ENCODE measurements at regions of chr9 and their contacts with region 1.

Region 1: GRCh38 chr9:131393622-131394463 is at the start of gene PRRC2B:
- DNase-seq: peak; percentile 71
- H3K4me3 ChIP-seq: peak within 1 kb of the TSS; percentile 57 to 87 (median 60)
- H3K27ac ChIP-seq: peak within 1 kb of the TSS; percentile 79
- H3K4me1 ChIP-seq: peaks cover 39% of the 10 kb centered on the region
- H3K27me3 ChIP-seq: no peaks in the 10 kb centered on the region
- CTCF ChIP-seq: peak; percentile 12 to 47
- total RNA-seq, gene PRRC2B: 84.0 to 170 TPM

Region 2: GRCh38 chr9:131349881-131350563 is 43.8 kb before region 1 on chr9:
- CTCF ChIA-PET with region 1: no interaction called
- dilution Hi-C with region 1: no loop called
- in situ Hi-C with region 1: no loop called
- intact Hi-C with region 1: no loop called
- DNase-seq: peak; percentile 58
- H3K4me3 ChIP-seq: peak overlapping the region in 2 of 3 experiments; percentile 21 to 41
- H3K27ac ChIP-seq: no peak overlapping the region
- H3K4me1 ChIP-seq: peaks cover 8% of the 10 kb centered on the region
- H3K27me3 ChIP-seq: no peaks in the 10 kb centered on the region
- CTCF ChIP-seq: peak; percentile 75 to 88

Region 3: DNA sequence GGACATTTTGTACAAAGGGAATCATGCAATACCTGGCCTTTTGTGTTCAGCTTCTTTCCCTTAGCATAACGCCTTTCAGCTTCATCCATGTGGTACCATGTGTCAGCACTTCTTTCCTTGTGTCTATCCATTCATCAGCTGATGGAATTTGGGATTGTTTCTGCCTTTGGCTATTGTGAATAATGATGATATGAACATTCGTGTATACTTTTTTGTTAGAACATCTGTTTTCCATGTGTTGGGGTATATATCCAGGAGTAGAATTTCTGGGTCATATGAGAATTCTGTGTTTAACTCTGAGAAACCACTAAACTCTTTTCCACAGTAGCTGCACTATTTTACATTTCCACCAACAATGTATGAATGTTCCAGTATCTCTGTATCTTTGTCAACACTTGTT is 14.8 kb before region 1 on chr9:
- CTCF ChIA-PET with region 1: no interaction called
- dilution Hi-C with region 1: no loop called
- in situ Hi-C with region 1: no loop called
- intact Hi-C with region 1: loop called (anchors 2 kb)
- DNase-seq: no peak
- H3K4me3 ChIP-seq: no peak overlapping the region
- H3K27ac ChIP-seq: no peak overlapping the region
- H3K4me1 ChIP-seq: peaks cover 10% of the 10 kb centered on the region
- H3K27me3 ChIP-seq: no peaks in the 10 kb centered on the region
- CTCF ChIP-seq: no peak

Region 4: DNA sequence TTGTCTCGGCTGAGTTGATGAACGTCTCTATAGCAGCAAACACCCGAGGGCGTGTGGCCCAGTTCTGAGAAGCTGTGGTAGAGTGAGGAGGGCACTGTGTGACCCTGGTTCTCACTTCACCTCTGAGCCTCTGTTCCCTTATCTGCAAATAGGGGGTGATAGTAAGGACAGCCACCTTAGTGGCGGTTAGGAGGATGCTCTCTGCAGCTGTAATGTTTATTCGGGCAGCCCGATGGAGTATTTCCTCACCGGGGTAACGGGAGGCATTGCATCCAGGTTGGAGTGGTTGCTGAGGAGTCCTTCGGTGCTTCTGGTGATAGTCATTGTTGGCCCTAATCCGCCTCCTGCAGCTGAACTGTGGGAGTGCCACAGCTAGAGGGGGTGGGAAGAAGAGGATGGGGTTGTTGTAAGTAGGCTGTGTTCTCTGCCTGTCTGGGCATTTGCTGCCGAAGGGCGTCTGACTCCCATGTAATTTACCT is 13.9 kb after region 1 on chr9:
- CTCF ChIA-PET with region 1: no interaction called
- dilution Hi-C with region 1: no loop called
- in situ Hi-C with region 1: no loop called
- intact Hi-C with region 1: loop called (anchors 2 kb)
- DNase-seq: peak; percentile 73
- H3K4me3 ChIP-seq: peak overlapping the region in 2 of 3 experiments; percentile 6 to 16
- H3K27ac ChIP-seq: peak overlapping the region; percentile 44
- H3K4me1 ChIP-seq: peaks cover 60% of the 10 kb centered on the region
- H3K27me3 ChIP-seq: no peaks in the 10 kb centered on the region
- CTCF ChIP-seq: peak; percentile 59 to 69

Region 5: GRCh38 chr9:131423171-131423581 is 29.3 kb after region 1 on chr9:
- CTCF ChIA-PET with region 1: no interaction called
- dilution Hi-C with region 1: no loop called
- in situ Hi-C with region 1: no loop called
- intact Hi-C with region 1: loop called (anchors 1 kb)
- DNase-seq: peak; percentile 97
- H3K4me3 ChIP-seq: peak overlapping the region in 1 of 3 experiments; percentile 20
- H3K27ac ChIP-seq: no peak overlapping the region
- H3K4me1 ChIP-seq: peaks cover 44% of the 10 kb centered on the region
- H3K27me3 ChIP-seq: no peaks in the 10 kb centered on the region
- CTCF ChIP-seq: no peak

Region 6: DNA sequence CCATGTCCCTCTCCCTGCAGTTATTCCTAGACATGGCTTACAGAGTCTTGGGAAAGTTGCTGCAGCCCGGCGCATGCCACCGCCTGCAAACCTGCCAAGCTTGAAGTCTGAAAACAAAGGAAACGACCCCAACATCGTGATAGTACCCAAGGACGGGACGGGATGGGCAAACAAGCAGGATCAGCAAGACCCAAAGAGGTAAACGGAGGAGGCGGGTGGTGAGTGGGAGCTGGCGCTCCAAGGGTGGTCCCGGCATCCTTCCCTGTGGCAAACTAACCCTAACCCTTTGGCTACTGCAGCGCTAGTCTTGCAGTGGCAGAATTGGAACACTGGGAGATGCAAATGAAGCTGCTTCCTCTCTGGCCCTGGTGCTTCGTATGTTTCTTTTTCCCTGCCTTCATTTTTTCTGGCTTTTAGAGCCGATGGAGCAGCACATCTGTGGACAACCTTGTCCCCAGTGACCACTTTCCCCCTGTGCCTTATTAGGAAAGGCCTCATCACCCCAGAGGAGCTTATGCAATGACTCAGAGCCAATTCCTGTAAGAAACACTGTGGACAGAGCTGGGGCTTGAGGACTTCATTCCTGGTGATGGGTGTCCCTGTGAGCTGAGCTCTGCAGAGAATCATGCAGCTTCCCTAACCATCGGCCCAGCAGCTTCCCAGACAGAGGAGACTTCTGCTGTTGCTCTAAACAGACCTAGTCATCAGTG is 38.9 kb after region 1 on chr9:
- CTCF ChIA-PET with region 1: no interaction called
- dilution Hi-C with region 1: loop called (anchors 5 kb)
- in situ Hi-C with region 1: no loop called
- intact Hi-C with region 1: no loop called
- DNase-seq: peak; percentile 51
- H3K4me3 ChIP-seq: no peak overlapping the region
- H3K27ac ChIP-seq: no peak overlapping the region
- H3K4me1 ChIP-seq: peaks cover 25% of the 10 kb centered on the region
- H3K27me3 ChIP-seq: no peaks in the 10 kb centered on the region
- CTCF ChIP-seq: no peak

Measured in mammary epithelial cell (primary cell).